Endothelial cell of umbilical vein (primary cell): ENCODE measurements at regions of chr2 and their contacts with region 1.

Region 1: GRCh38 chr2:69914170-69914960 is 544 bp upstream of the MXD1 start:
- DNase-seq: peak; percentile 100
- H3K4me3 ChIP-seq: peak overlapping the region; percentile 62 to 76 (median 65)
- H3K27ac ChIP-seq: peak overlapping the region; percentile 84
- H3K4me1 ChIP-seq: peaks cover 35% of the 10 kb centered on the region
- H3K27me3 ChIP-seq: no peaks in the 10 kb centered on the region
- CTCF ChIP-seq: peak in 1 of 2 donors; percentile 25
- POLR2A ChIP-seq: peak; percentile 84

Region 2: GRCh38 chr2:69514406-69514805 is 400.0 kb before region 1 on chr2:
- CTCF ChIA-PET with region 1: no interaction called
- POLR2A ChIA-PET with region 1: no interaction called
- dilution Hi-C with region 1: no loop called
- intact Hi-C with region 1: no loop called
- DNase-seq: peak; percentile 67
- H3K4me3 ChIP-seq: no peak overlapping the region
- H3K27ac ChIP-seq: no peak overlapping the region
- H3K4me1 ChIP-seq: no peaks in the 10 kb centered on the region
- H3K27me3 ChIP-seq: no peaks in the 10 kb centered on the region
- CTCF ChIP-seq: no peak
- POLR2A ChIP-seq: no peak

Region 3: DNA sequence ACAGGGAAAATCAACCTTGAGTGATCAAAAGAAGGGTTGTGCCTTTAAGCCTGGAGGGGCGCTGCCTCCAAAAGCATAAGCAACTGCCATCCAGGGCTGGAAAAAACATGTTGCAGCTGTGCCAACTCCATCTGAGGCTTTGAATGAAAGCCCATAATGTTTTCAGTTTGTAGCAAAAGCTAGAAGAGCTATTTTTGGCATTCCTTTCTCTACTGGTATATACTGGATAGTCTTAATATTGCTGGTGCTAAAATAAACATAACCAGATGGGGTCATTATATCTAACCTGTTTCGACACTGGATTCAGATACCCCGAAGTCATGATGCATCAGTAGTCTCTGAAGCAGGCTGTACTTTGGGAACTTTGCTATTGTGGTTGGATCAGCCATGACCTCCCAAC is 147.3 kb before region 1 on chr2:
- CTCF ChIA-PET with region 1: no interaction called
- POLR2A ChIA-PET with region 1: no interaction called
- dilution Hi-C with region 1: no loop called
- intact Hi-C with region 1: no loop called
- DNase-seq: no peak
- H3K4me3 ChIP-seq: no peak overlapping the region
- H3K27ac ChIP-seq: no peak overlapping the region
- H3K4me1 ChIP-seq: peaks cover 5% of the 10 kb centered on the region
- H3K27me3 ChIP-seq: no peaks in the 10 kb centered on the region
- CTCF ChIP-seq: no peak
- POLR2A ChIP-seq: no peak

Region 4: GRCh38 chr2:69933839-69934613 is 19.7 kb after region 1 on chr2:
- CTCF ChIA-PET with region 1: interaction called, 10 read pairs
- POLR2A ChIA-PET with region 1: interaction called, 6 read pairs
- dilution Hi-C with region 1: no loop called
- intact Hi-C with region 1: loop called (anchors 1 kb)
- DNase-seq: peak; percentile 87
- H3K4me3 ChIP-seq: peak overlapping the region in 1 of 3 experiments; percentile 30
- H3K27ac ChIP-seq: peak overlapping the region; percentile 95
- H3K4me1 ChIP-seq: peaks cover 37% of the 10 kb centered on the region
- H3K27me3 ChIP-seq: no peaks in the 10 kb centered on the region
- CTCF ChIP-seq: no peak
- POLR2A ChIP-seq: peak; percentile 77

Region 5: GRCh38 chr2:70070541-70071268 is 156.3 kb after region 1 on chr2:
- CTCF ChIA-PET with region 1: interaction called, 104 read pairs
- POLR2A ChIA-PET with region 1: interaction called, 12 read pairs
- dilution Hi-C with region 1: no loop called
- intact Hi-C with region 1: loop called (anchors 1 kb)
- DNase-seq: peak; percentile 88
- H3K4me3 ChIP-seq: no peak overlapping the region
- H3K27ac ChIP-seq: no peak overlapping the region
- H3K4me1 ChIP-seq: peaks cover 3% of the 10 kb centered on the region
- H3K27me3 ChIP-seq: no peaks in the 10 kb centered on the region
- CTCF ChIP-seq: peak; percentile 75 to 81
- POLR2A ChIP-seq: no peak

Region 6: DNA sequence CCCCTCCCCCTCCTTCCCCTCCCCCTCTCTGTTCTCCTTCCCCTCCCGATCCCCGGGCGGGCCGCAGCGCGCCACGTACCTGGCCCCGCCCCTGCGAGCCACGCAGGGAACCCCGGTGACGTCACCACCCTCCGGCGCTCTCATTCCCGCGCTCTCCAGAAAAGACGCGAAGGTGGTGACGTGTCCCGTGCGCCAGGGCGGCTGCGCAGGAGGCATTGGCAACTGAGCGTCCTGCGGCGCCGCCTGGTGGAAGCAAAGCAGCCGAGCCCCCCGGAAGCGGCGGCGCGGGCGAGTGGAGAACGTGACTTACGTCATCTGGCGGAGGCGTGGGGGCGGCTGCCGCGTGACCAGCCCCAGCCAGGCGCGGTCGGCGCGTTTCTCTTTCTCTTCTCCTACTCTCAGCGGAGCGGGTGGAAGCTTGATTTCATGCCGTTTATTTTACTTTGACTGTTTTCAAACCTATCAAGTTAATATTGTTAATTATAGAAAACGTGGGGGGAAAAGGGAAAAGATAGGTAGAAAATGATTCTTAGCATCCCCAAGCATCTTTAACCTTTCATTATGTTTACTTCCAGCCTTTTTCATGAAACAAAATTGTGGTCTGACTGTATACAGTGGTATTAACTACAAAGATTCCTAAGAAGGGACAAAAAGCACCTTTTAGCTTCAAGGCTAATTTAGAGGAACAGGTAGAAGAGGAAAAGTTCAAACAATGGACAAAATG is 228.4 kb after region 1 on chr2:
- CTCF ChIA-PET with region 1: interaction called, 18 read pairs
- POLR2A ChIA-PET with region 1: interaction called, 13 read pairs
- dilution Hi-C with region 1: no loop called
- intact Hi-C with region 1: loop called (anchors 1 kb)
- DNase-seq: peak; percentile 100
- H3K4me3 ChIP-seq: peak overlapping the region; percentile 40 to 81 (median 47)
- H3K27ac ChIP-seq: peak overlapping the region; percentile 95
- H3K4me1 ChIP-seq: peaks cover 14% of the 10 kb centered on the region
- H3K27me3 ChIP-seq: no peaks in the 10 kb centered on the region
- CTCF ChIP-seq: peak; percentile 97 to 98
- POLR2A ChIP-seq: no peak

Region 7: GRCh38 chr2:70214953-70215549 is 300.7 kb after region 1 on chr2:
- CTCF ChIA-PET with region 1: interaction called, 5 read pairs
- POLR2A ChIA-PET with region 1: no interaction called
- dilution Hi-C with region 1: no loop called
- intact Hi-C with region 1: loop called (anchors 5 kb)
- DNase-seq: no peak
- H3K4me3 ChIP-seq: no peak overlapping the region
- H3K27ac ChIP-seq: no peak overlapping the region
- H3K4me1 ChIP-seq: peaks cover 8% of the 10 kb centered on the region
- H3K27me3 ChIP-seq: no peaks in the 10 kb centered on the region
- CTCF ChIP-seq: no peak
- POLR2A ChIP-seq: no peak

Region 8: GRCh38 chr2:70258532-70258874 is 344.1 kb after region 1 on chr2:
- CTCF ChIA-PET with region 1: interaction called, 3 read pairs
- POLR2A ChIA-PET with region 1: interaction called, 10 read pairs
- dilution Hi-C with region 1: no loop called
- intact Hi-C with region 1: no loop called
- DNase-seq: no peak
- H3K4me3 ChIP-seq: peak overlapping the region; percentile 57 to 77 (median 73)
- H3K27ac ChIP-seq: no peak overlapping the region
- H3K4me1 ChIP-seq: peaks cover 4% of the 10 kb centered on the region
- H3K27me3 ChIP-seq: no peaks in the 10 kb centered on the region
- CTCF ChIP-seq: no peak
- POLR2A ChIP-seq: no peak